Activated naive CD4-positive, alpha-beta T cell treated with anti-CD3 and anti-CD28 coated beads for 36 hours (primary cell): ENCODE measurements at regions of chr5 and their contacts with region 1.

Region 1: DNA sequence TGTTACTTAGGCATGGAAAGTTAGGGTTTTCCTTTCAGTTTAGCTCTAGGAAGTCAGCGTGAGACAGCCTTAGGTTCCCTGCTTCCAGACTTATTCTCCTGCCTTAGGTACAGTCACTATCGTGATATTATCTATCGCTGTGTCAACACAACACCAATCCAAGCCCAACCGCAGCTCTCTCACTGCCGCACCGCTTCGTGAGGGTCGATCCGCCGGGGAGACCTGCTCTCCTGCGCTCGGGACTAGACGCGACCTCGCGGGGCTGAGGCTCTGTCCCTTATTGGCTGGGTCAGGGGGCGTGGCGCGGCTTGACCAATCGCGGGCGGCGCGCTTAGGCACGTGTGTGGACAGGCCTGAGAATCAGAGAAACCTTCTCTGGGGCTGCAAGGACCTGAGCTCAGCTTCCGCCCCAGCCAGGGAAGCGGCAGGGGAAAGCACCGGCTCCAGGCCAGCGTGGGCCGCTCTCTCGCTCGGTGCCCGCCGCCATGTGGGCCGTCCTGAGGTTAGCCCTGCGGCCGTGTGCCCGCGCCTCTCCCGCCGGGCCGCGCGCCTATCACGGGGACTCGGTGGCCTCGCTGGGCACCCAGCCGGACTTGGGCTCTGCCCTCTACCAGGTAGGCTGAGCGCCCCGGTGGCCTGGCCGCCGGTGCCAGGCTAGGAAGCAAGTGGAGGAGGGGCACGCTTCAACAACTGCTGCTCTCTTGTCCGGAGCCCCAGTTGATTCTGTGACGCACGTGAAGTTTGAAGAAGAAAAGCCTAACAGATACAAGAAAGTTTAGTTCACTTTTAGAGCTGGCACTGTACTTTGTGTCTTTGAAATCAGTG is at the start of gene MCCC2:
- DNase-seq: peak; percentile 98
- H3K4me3 Mint-ChIP-seq: peak within 1 kb of the TSS; percentile 94
- H3K27ac Mint-ChIP-seq: peak within 1 kb of the TSS; percentile 94
- H3K4me1 Mint-ChIP-seq: peaks cover 31% of the 10 kb centered on the region
- H3K27me3 Mint-ChIP-seq: no peaks in the 10 kb centered on the region
- total RNA-seq, gene MCCC2: 49.3 to 51.6 TPM

Region 2: GRCh38 chr5:71455427-71456361 is 131.5 kb before region 1 on chr5 and contains the start of gene BDP1:
- CTCF ChIA-PET with region 1: no interaction called
- intact Hi-C with region 1: loop called (anchors 1 kb)
- DNase-seq: peak; percentile 99
- H3K4me3 Mint-ChIP-seq: peak within 1 kb of the TSS; percentile 92
- H3K27ac Mint-ChIP-seq: peak within 1 kb of the TSS; percentile 95
- H3K4me1 Mint-ChIP-seq: peaks cover 20% of the 10 kb centered on the region
- H3K27me3 Mint-ChIP-seq: peaks cover 3% of the 10 kb centered on the region
- total RNA-seq, gene BDP1: 20.6 to 20.8 TPM